ENCODE measurements at regions of chr4 and their contacts with region 1.

Region 1: DNA sequence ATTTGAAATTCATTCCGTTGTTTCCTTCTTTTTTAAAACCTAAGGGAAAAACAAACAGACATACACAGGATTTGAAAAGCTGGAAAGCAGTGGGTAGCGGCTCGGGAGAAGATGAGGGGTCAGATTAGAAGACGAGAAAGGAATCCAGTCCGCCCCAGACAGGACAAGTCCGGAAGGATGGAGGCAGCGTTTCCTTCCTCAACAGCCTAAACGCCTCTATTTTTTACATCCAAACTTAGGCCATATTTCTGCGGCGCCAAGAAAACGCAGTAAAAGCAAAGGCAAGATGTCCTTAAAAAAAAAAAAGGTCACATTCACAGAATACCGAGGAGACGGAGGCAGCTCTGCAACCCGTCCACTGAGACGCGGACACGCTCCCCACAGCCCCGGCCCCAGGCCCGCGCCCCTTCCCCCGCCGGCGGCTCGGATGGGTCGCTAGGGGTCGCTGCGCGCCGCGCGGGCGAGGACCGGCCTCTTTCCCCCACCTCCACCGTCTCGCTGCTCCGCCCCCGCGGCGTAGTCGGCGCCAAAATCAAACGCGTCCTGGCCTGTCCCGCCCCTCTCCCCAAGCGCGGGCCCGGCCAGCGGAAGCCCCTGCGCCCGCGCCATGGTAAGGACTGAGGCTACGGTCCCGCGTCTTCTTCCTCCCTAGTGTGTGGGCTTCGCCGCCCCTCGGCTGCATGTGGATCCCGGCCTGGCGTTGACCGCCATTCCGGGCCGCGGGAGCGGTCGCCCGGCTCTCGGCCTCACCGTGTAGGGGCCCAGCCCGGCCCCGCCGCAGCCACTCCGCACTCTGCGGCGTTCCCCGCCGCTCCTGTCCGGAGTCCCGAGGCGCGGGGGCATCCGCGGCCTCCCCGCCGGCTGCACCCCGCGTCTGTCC is at the start of gene MND1:
- DNase-seq: peak; percentile 85 to 93 (median 87)
- ATAC-seq: peak; percentile 78 to 97 (median 93)
- H3K4me3 ChIP-seq: peak within 1 kb of the TSS; percentile 64 to 96 (median 78)
- H3K27ac ChIP-seq: peak within 1 kb of the TSS in 1 of 12 donors; percentile 3
- H3K4me1 ChIP-seq: peaks cover 0 to 25% (median 13%) of the 10 kb centered on the region in 12 donors
- H3K27me3 ChIP-seq: no peaks in the 10 kb centered on the region
- CTCF ChIP-seq: peak; percentile 95 to 99 (median 97)
- POLR2A ChIP-seq: no peak
- total RNA-seq, gene MND1: 0.30 to 1.3 (median 0.73) TPM in 3 of 9 donors, not detected in the others

Region 2: GRCh38 chr4:152559641-152560040 is 784.7 kb before region 1 on chr4:
- intact Hi-C with region 1: no loop called
- DNase-seq: no peak
- ATAC-seq: no peak
- H3K4me3 ChIP-seq: no peak overlapping the region
- H3K27ac ChIP-seq: no peak overlapping the region
- H3K4me1 ChIP-seq: peaks cover 0 to under 1% (median 0%) of the 10 kb centered on the region in 12 donors
- H3K27me3 ChIP-seq: no peaks in the 10 kb centered on the region
- CTCF ChIP-seq: no peak
- POLR2A ChIP-seq: no peak

Region 3: GRCh38 chr4:153362184-153362583 is 17.8 kb after region 1 on chr4:
- intact Hi-C with region 1: no loop called
- DNase-seq: no peak
- ATAC-seq: no peak
- H3K4me3 ChIP-seq: no peak overlapping the region
- H3K27ac ChIP-seq: no peak overlapping the region
- H3K4me1 ChIP-seq: no peaks in the 10 kb centered on the region
- H3K27me3 ChIP-seq: no peaks in the 10 kb centered on the region
- CTCF ChIP-seq: no peak
- POLR2A ChIP-seq: no peak

Region 4: GRCh38 chr4:153432968-153433753 is 88.8 kb after region 1 on chr4:
- intact Hi-C with region 1: loop called in 7 of 10 experiments (anchors 5 to 10 kb)
- DNase-seq: peak in 4 of 5 donors; percentile 63 to 66 (median 66)
- ATAC-seq: peak; percentile 57 to 92 (median 88)
- H3K4me3 ChIP-seq: peak overlapping the region in 4 of 12 donors; percentile 14 to 41 (median 30)
- H3K27ac ChIP-seq: peak overlapping the region in 1 of 12 donors; percentile 63
- H3K4me1 ChIP-seq: peaks cover 0 to 28% (median 0%) of the 10 kb centered on the region in 12 donors
- H3K27me3 ChIP-seq: no peaks in the 10 kb centered on the region
- CTCF ChIP-seq: peak; percentile 59 to 85 (median 69)
- POLR2A ChIP-seq: no peak

Region 5: GRCh38 chr4:153453402-153453801 is 109.0 kb after region 1 on chr4:
- intact Hi-C with region 1: no loop called
- DNase-seq: no peak
- ATAC-seq: peak in 1 of 4 donors; percentile 9
- H3K4me3 ChIP-seq: no peak overlapping the region
- H3K27ac ChIP-seq: no peak overlapping the region
- H3K4me1 ChIP-seq: peaks cover 0 to 25% (median 0%) of the 10 kb centered on the region in 12 donors
- H3K27me3 ChIP-seq: no peaks in the 10 kb centered on the region
- CTCF ChIP-seq: no peak
- POLR2A ChIP-seq: no peak

Region 6: GRCh38 chr4:153634738-153635353 is 290.5 kb after region 1 on chr4:
- intact Hi-C with region 1: loop called in 4 of 10 experiments (anchors 5 to 10 kb)
- DNase-seq: no peak
- ATAC-seq: peak in 3 of 4 donors; percentile 41 to 62 (median 53)
- H3K4me3 ChIP-seq: no peak overlapping the region
- H3K27ac ChIP-seq: no peak overlapping the region
- H3K4me1 ChIP-seq: peaks cover 0 to 3% (median 0%) of the 10 kb centered on the region in 12 donors
- H3K27me3 ChIP-seq: no peaks in the 10 kb centered on the region
- CTCF ChIP-seq: peak; percentile 46 to 70 (median 60)
- POLR2A ChIP-seq: no peak

Region 7: GRCh38 chr4:153643406-153644383 is 299.3 kb after region 1 on chr4:
- intact Hi-C with region 1: loop called in 4 of 10 experiments (anchors 5 to 10 kb)
- DNase-seq: no peak
- ATAC-seq: peak in 2 of 4 donors; percentile 57 to 63
- H3K4me3 ChIP-seq: no peak overlapping the region
- H3K27ac ChIP-seq: no peak overlapping the region
- H3K4me1 ChIP-seq: peaks cover 0 to 42% (median 0%) of the 10 kb centered on the region in 12 donors
- H3K27me3 ChIP-seq: no peaks in the 10 kb centered on the region
- CTCF ChIP-seq: peak in 11 of 12 donors; percentile 2 to 54 (median 35)
- POLR2A ChIP-seq: no peak

Region 8: DNA sequence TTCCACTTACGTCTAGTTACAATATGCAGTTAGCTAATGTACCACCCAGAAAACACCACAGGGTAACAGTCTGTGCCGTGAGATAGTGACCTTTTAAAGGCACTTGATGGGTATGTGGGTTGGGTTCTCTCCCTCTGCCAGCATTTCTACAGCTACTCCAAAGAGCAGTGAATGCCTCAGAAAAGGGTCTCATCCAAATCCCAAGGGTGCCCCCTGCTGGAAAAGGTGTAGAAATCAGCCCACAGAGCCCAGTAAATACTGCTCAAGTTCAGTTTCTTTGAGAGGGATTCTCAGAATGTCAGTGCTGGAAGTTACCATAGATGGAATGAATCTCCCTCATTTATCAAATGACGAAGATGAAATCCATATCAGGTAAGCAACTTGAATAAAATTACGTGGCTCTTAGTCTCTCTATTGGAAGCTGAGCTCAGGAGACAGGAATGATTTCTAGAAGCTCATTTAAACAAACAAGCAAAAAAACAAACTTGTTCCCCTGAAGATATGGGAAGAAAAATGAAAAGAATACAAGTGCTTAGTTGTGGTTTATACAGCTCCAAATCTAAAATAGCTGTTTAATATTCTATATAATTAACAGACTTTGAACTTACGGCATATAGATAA is 405.9 kb after region 1 on chr4:
- intact Hi-C with region 1: loop called in 4 of 10 experiments (anchors 5 to 10 kb)
- DNase-seq: peak in 3 of 5 donors; percentile 39 to 61 (median 56)
- ATAC-seq: peak; percentile 51 to 77 (median 70)
- H3K4me3 ChIP-seq: no peak overlapping the region
- H3K27ac ChIP-seq: no peak overlapping the region
- H3K4me1 ChIP-seq: peaks cover 0 to 28% (median 0%) of the 10 kb centered on the region in 12 donors
- H3K27me3 ChIP-seq: peaks cover 0 to 5% (median 0%) of the 10 kb centered on the region in 9 donors
- CTCF ChIP-seq: peak; percentile 49 to 75 (median 64)
- POLR2A ChIP-seq: no peak

Measured in heart left ventricle (tissue), 16 donors.